ENCODE measurements at regions of chr14 and their contacts with region 1.

Region 1: DNA sequence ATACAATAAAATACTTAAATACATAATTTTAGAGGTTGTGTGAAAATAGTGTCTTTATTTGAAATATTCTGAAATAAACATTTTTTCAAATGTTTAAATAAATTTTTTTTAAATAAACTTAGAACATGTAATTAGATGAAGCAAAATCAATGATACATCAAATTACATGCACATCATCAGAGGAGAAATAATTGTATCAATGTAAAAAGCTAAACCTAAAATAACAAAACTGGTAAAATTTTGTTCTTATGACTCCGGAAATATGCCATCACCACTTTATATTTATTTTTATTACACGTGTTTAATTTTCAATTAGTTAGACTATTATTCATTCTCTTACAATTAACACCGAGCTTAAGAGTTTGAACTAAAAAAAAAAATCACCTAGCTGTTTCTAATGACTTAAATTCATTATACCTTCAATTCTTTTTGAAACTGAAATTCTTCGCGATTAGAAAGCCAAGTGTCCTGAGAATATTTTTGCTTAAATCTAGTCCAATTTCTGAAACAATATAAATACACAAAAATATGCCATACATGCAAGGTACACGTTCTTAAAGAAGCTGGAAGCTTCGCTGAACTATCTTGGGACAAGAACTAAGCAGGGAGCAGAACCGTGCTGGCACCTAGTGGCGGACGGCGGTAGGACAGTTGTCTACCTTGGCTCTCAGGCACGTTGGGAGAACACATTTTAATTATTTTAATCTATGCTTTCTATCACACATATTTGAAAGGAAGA is 230.5 kb downstream of the SLC25A21 start:
- DNase-seq: peak; percentile 61
- ATAC-seq: peak; percentile 50 to 68

Region 2: DNA sequence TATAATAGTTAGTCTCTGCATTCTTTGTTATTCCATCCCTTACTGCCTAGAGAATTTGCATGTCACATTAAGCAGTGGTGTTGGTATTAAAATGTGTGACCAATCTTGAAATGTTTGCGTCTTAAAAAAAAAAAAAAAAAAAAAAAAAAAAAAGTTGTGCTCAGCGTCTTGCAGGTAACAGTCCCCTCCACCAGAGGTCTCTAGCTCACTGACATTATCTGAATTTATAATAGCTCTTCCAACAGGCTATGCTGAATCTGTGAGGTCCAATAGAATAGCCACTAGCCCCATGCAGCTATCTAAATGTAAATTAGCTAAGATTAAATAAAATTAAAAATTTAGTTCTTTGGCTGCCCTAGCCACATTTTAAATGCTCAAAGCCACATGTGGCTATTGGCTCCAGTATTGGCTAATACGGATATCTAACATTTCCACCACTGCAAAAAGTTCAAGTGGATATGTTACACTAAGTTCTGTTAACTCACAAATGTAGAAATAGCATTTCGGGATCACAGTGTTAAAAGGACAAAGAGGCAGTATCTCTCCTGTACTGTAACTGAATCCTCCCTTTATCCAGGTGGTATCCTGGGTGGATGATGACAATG is 388.2 kb before region 1 on chr14:
- intact Hi-C with region 1: loop called in 1 of 2 experiments (anchors 2 kb)
- DNase-seq: no peak
- ATAC-seq: peak in 1 of 2 donors; percentile 51

Region 3: DNA sequence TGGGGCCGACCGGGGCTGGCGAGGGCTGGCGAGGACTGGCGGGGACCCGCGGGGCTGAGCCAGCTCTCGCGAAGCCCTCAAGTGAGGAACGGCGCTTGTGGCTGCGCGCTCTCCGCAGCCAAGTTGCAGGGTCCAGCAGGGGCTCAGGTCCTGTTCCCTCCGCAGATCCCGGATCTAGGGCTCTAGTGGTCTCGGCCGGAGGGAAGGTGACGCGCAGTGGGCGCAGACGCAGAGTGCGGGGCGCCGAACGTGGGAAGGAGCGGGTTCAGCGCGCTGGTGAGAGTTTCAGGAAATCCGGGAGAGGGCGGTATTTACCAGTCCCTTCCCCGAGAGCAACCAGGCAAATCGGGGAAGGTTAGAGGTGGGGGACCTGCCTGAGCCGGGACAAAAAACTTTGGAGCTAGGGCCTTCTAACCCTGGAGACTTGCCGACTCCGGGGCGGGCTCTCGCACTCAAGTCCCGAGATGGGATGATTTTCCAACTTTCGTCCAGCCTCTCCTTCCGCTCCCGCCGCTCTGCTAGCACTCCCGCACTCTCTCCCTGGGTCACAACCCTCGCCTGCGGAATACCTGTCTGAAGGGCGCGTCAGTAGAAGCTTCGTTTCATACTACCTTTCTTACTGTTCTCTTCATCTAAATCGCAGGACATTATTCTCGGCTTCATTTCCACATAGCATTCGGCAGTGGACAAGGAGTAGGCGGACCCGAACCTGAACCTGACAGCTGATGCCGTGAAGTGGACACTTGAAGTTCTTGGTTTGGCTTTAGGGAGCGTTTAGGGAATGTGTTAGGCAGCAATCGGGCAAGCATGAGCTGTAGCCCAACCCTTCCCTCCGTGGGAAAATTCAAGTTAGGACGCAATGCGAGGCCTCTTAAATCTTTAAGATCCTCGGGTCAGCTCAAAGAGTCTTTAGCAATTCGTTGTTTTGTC is 293.9 kb before region 1 on chr14:
- intact Hi-C with region 1: loop called (anchors 1 to 5 kb)
- DNase-seq: peak; percentile 17
- ATAC-seq: peak; percentile 80 to 89

Region 4: DNA sequence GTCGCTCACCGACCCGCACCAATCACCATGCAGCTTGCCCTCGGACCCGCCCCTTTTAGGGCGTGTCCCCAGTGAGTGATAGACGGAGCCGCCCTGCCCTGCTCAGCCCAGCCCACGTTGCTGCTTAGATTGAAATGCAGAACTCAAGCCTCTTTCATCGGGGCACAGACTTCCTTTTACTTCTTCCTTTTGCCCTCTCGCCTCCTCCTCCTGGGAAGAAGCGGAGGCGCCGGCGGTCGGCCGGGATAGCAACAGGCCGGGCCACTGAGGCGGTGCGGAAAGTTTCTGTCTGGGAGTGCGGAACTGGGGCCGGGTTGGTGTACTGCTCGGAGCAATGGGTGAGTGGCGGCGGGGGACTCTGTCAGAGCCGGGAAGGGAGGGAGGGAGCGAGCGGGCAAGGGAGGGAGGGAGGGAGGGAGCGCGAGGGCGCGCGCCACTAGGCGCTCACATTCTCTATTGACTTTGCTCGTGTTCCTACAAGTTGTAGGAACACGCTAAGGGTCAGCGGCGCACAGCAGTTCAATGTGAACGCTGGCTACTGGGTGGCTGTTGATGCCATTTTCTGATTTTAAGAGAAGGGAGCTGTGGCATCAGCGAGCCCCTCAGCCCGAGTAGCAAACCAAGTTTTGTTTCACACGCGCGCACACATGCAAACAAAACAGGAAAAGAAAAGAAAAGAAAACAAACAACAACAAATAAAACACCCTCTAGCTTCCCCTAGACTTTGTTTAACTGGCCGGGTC is 280.0 kb before region 1 on chr14 and contains the start of gene PAX9:
- intact Hi-C with region 1: loop called in 1 of 2 experiments (anchors 5 kb)
- DNase-seq: peak; percentile 77
- ATAC-seq: peak; percentile 85 to 97
- total RNA-seq, gene PAX9: not detected